Activated T-helper 2 cell treated with anti-CD3 and anti-CD28 coated beads, Interferon-gamma antibody, Interleukin-2, Interleukin-4, amounts not matched to agents 10 μg/mL and 5 μg/mL and 100 μg/mL, durations not matched to agents 14 hours and 24 hours and 36 hours (primary cell): ENCODE measurements at regions of chr3 and their contacts with region 1.

Region 1: GRCh38 chr3:14921078-14921616 is 26.2 kb upstream of the NR2C2 start:
- DNase-seq: peak; percentile 67
- H3K4me3 Mint-ChIP-seq: no peak overlapping the region
- H3K27ac Mint-ChIP-seq: no peak overlapping the region
- H3K4me1 Mint-ChIP-seq: no peaks in the 10 kb centered on the region
- H3K27me3 Mint-ChIP-seq: no peaks in the 10 kb centered on the region

Region 2: DNA sequence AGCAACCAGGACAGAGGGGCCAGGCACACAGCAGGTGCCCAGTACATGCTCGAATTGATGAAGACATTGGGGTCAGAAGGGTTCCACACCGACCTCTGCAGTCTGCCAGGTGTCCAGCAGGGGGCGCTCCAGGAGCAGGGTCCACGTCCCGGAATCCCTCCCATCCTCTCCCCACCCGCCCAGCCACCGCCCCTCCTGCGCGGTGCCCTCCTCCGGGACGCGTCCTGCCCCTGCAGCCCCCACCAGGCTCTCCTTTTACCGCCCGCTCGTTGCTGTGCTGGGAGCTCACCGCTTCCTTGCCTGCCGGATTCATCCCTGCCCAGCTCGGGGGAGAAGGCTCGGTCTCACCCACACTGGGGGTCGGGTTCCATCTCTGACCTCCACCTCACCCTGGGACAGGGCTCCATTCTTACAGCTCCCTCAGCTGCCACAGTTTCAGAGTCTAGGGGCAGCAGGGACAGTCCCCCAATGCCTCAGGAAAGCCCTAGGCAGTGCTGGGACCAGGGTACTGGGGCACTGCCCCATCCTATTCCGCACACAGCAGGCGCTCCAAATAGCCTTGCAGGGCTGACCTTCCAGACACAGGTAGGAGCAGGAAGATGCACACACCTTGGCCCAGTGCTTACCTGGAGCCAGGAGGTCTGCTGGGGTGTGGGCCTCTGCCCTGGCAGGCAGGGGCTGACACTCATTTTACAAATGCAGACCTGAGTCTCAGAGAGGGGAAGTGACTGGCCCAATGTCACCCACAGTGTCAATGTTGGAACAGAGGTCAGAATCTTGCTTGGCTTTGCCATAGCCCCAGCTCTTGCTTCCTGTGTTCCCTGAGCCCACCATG is 412.0 kb before region 1 on chr3:
- intact Hi-C with region 1: loop called (anchors 2 kb)
- DNase-seq: peak; percentile 49
- H3K4me3 Mint-ChIP-seq: no peak overlapping the region
- H3K27ac Mint-ChIP-seq: no peak overlapping the region
- H3K4me1 Mint-ChIP-seq: no peaks in the 10 kb centered on the region
- H3K27me3 Mint-ChIP-seq: no peaks in the 10 kb centered on the region

Region 3: DNA sequence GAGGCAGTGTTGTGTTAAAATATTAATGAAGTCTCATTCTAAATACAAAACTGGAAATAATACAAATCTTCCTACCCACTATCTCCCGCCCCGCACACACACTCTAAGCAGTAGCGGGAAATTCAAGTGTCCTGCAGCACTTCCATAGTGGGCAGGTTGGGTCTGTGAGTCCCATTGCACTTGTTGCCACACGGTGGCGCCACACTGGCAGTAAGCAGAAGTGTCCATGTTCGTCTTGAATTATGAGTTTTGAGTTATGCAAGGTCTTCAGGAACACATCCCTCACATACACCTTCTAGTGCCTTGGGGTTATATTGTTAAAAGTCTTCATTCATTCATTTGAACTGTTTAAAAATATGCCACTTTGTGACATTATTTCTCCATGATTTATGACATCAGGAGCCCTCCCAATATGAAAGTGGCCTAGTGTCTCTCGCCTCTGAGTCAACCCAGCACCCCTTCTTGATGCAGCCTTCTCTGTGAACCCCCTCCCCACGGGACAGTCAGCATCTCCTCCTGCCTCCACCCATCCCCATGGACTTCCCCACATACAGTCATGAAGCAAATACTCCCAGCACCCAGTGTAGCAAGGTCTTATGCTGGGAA is 287.2 kb before region 1 on chr3:
- intact Hi-C with region 1: loop called (anchors 1 kb)
- DNase-seq: peak; percentile 32
- H3K4me3 Mint-ChIP-seq: no peak overlapping the region
- H3K27ac Mint-ChIP-seq: no peak overlapping the region
- H3K4me1 Mint-ChIP-seq: no peaks in the 10 kb centered on the region
- H3K27me3 Mint-ChIP-seq: peaks cover 16% of the 10 kb centered on the region

Region 4: DNA sequence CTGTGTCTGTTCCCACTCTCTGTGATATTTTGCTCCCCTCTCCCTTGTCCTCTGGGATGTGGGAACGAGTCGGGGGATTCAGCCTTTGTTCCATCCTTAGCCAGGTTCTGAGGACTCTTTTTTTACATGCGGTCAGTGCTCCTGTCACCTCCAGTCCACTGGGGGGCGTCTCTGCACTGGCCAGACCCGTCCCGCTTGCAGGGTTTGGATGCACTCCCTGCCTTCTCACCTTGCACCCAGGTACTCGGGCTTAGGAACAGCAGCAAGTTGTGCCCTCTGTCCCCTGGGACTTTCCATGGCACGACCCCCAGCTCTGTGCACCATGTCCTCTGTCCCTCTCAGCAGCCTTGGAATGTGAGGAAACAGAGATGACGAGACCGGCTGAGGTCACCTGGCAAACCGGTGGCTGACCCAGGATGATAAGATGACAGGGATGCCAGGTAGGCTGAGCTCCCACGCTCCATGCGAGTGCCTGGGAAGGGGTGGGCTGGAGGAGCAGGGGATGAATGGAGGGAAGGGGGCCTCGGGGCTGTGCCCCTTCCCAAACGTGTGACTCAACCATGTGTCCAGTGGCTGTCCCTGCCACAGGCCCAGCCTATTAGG is 129.7 kb before region 1 on chr3:
- intact Hi-C with region 1: loop called (anchors 2 kb)
- DNase-seq: peak; percentile 37
- H3K4me3 Mint-ChIP-seq: no peak overlapping the region
- H3K27ac Mint-ChIP-seq: no peak overlapping the region
- H3K4me1 Mint-ChIP-seq: no peaks in the 10 kb centered on the region
- H3K27me3 Mint-ChIP-seq: peaks cover 1% of the 10 kb centered on the region